CD4-positive, alpha-beta memory T cell (primary cell): ENCODE measurements at regions of chr2 and their contacts with region 1.

Region 1: DNA sequence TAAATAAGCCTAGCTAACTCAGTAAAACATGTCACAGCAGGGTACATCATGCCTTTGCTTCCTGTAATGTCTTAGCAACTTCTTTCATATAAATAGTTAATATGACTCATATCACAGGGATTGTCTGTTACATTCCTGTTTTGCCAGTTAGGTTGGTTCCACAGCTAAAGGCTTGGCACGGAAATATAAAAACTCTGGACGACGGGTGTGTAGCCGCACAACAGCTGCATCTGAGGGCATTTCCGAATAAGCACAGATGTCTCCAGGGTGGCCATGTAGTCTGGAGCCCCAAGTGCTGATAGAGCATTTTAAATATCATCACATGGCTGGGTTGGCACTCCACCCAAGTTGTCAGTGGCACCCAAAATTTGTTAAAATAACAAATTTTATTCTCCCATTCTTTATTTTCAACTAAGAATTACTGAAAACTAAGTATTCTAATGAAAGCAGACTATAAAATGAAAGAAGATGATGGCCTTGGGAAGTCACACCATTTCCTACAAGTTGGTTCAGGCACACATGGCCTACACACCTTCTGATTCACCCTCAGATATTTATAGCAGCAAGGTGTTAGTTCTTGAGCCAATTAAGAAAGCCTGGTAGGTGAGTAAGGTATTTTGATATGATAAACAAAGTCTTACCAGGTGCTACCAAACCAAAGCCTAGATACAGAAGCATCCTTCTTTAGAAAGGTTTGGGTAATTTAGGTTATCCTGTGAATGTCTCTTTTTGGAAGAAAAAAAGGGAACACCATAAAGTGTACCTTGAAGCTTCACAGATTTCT is 61.8 kb upstream of the STK17B start:
- DNase-seq: no peak
- H3K4me3 ChIP-seq: no peak overlapping the region
- H3K4me3 Mint-ChIP-seq: peak overlapping the region in 6 of 8 donors; percentile 21 to 41 (median 32)
- H3K27ac ChIP-seq: peak overlapping the region; percentile 33
- H3K27ac Mint-ChIP-seq: peak overlapping the region; percentile 83 to 99 (median 93)
- H3K4me1 ChIP-seq: peaks cover 96% of the 10 kb centered on the region
- H3K4me1 Mint-ChIP-seq: peaks cover 65 to 97% (median 79%) of the 10 kb centered on the region in 4 donors
- H3K27me3 ChIP-seq: no peaks in the 10 kb centered on the region
- H3K27me3 Mint-ChIP-seq: no peaks in the 10 kb centered on the region

Region 2: DNA sequence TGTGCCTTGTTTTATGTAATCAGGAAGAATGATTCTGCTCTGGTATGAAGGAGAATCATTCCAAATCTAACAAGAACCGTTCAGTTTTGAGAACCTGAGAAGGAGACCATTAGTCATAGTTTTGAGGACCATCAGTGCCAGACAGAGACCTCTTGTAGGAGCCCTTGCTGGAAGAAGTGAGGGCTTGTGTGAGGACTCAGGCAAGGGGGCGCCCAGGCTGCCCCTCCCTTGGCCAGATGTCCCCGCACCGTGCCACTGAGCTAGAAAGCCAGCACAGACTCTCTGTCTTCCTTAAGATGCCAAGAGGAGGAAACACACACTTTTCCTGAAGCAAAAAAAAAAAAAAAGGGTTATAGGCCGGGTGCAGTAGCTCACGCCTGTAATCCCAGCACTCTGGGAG is 631.9 kb before region 1 on chr2:
- CTCF ChIA-PET with region 1: no interaction called
- POLR2A ChIA-PET with region 1: no interaction called
- intact Hi-C with region 1: no loop called
- DNase-seq: no peak
- H3K4me3 ChIP-seq: no peak overlapping the region
- H3K4me3 Mint-ChIP-seq: no peak overlapping the region
- H3K27ac ChIP-seq: no peak overlapping the region
- H3K27ac Mint-ChIP-seq: no peak overlapping the region
- H3K4me1 ChIP-seq: peaks cover 6% of the 10 kb centered on the region
- H3K4me1 Mint-ChIP-seq: peaks cover 12 to 17% (median 12%) of the 10 kb centered on the region in 4 donors
- H3K27me3 ChIP-seq: no peaks in the 10 kb centered on the region
- H3K27me3 Mint-ChIP-seq: no peaks in the 10 kb centered on the region

Region 3: GRCh38 chr2:196076778-196077568 is 156.2 kb before region 1 on chr2:
- CTCF ChIA-PET with region 1: interaction called, 33 read pairs
- POLR2A ChIA-PET with region 1: no interaction called
- intact Hi-C with region 1: no loop called
- DNase-seq: no peak
- H3K4me3 ChIP-seq: no peak overlapping the region
- H3K4me3 Mint-ChIP-seq: no peak overlapping the region
- H3K27ac ChIP-seq: no peak overlapping the region
- H3K27ac Mint-ChIP-seq: no peak overlapping the region
- H3K4me1 ChIP-seq: peaks cover 25% of the 10 kb centered on the region
- H3K4me1 Mint-ChIP-seq: peaks cover 14 to 22% (median 16%) of the 10 kb centered on the region in 4 donors
- H3K27me3 ChIP-seq: no peaks in the 10 kb centered on the region
- H3K27me3 Mint-ChIP-seq: no peaks in the 10 kb centered on the region

Region 4: GRCh38 chr2:196200557-196200956 is 32.7 kb before region 1 on chr2:
- CTCF ChIA-PET with region 1: interaction called, 4 read pairs
- POLR2A ChIA-PET with region 1: interaction called, 20 read pairs
- intact Hi-C with region 1: no loop called
- DNase-seq: peak; percentile 45 to 55 (median 50)
- H3K4me3 ChIP-seq: peak overlapping the region; percentile 43 to 57
- H3K4me3 Mint-ChIP-seq: peak overlapping the region; percentile 74 to 92 (median 80)
- H3K27ac ChIP-seq: peak overlapping the region; percentile 70
- H3K27ac Mint-ChIP-seq: peak overlapping the region; percentile 72 to 98 (median 95)
- H3K4me1 ChIP-seq: peaks cover 63% of the 10 kb centered on the region
- H3K4me1 Mint-ChIP-seq: peaks cover 37 to 58% (median 44%) of the 10 kb centered on the region in 4 donors
- H3K27me3 ChIP-seq: no peaks in the 10 kb centered on the region
- H3K27me3 Mint-ChIP-seq: no peaks in the 10 kb centered on the region

Region 5: GRCh38 chr2:196213252-196213980 is 19.8 kb before region 1 on chr2:
- CTCF ChIA-PET with region 1: interaction called, 38 read pairs
- POLR2A ChIA-PET with region 1: interaction called, 31 read pairs
- intact Hi-C with region 1: no loop called
- DNase-seq: peak in 2 of 5 donors; percentile 23 to 26
- H3K4me3 ChIP-seq: no peak overlapping the region
- H3K4me3 Mint-ChIP-seq: peak overlapping the region in 1 of 8 donors; percentile 44
- H3K27ac ChIP-seq: no peak overlapping the region
- H3K27ac Mint-ChIP-seq: peak overlapping the region; percentile 78 to 100 (median 99)
- H3K4me1 ChIP-seq: peaks cover 61% of the 10 kb centered on the region
- H3K4me1 Mint-ChIP-seq: peaks cover 45 to 80% (median 65%) of the 10 kb centered on the region in 4 donors
- H3K27me3 ChIP-seq: no peaks in the 10 kb centered on the region
- H3K27me3 Mint-ChIP-seq: no peaks in the 10 kb centered on the region

Region 6: GRCh38 chr2:196268538-196269338 is 35.5 kb after region 1 on chr2:
- CTCF ChIA-PET with region 1: interaction called, 5 read pairs
- POLR2A ChIA-PET with region 1: interaction called, 64 read pairs
- intact Hi-C with region 1: loop called (anchors 5 kb)
- DNase-seq: peak in 3 of 5 donors; percentile 26 to 55 (median 31)
- H3K4me3 ChIP-seq: no peak overlapping the region
- H3K4me3 Mint-ChIP-seq: peak overlapping the region; percentile 36 to 89 (median 81)
- H3K27ac ChIP-seq: peak overlapping the region; percentile 45
- H3K27ac Mint-ChIP-seq: peak overlapping the region; percentile 73 to 94 (median 84)
- H3K4me1 ChIP-seq: peaks cover 69% of the 10 kb centered on the region
- H3K4me1 Mint-ChIP-seq: peaks cover 40 to 71% (median 53%) of the 10 kb centered on the region in 4 donors
- H3K27me3 ChIP-seq: no peaks in the 10 kb centered on the region
- H3K27me3 Mint-ChIP-seq: no peaks in the 10 kb centered on the region